Activated T-helper 1 cell treated with anti-CD3 and anti-CD28 coated beads, Interleukin-12 subunit alpha, Interleukin-12 subunit beta, Interleukin-2, Interleukin-4 antibody, amounts not matched to agents 30 ng/mL and 10 ng/mL and 1 ng/mL, durations not matched to agents 14 hours and 24 hours and 36 hours (primary cell): ENCODE measurements at regions of chr22 and their contacts with region 1.

Region 1: DNA sequence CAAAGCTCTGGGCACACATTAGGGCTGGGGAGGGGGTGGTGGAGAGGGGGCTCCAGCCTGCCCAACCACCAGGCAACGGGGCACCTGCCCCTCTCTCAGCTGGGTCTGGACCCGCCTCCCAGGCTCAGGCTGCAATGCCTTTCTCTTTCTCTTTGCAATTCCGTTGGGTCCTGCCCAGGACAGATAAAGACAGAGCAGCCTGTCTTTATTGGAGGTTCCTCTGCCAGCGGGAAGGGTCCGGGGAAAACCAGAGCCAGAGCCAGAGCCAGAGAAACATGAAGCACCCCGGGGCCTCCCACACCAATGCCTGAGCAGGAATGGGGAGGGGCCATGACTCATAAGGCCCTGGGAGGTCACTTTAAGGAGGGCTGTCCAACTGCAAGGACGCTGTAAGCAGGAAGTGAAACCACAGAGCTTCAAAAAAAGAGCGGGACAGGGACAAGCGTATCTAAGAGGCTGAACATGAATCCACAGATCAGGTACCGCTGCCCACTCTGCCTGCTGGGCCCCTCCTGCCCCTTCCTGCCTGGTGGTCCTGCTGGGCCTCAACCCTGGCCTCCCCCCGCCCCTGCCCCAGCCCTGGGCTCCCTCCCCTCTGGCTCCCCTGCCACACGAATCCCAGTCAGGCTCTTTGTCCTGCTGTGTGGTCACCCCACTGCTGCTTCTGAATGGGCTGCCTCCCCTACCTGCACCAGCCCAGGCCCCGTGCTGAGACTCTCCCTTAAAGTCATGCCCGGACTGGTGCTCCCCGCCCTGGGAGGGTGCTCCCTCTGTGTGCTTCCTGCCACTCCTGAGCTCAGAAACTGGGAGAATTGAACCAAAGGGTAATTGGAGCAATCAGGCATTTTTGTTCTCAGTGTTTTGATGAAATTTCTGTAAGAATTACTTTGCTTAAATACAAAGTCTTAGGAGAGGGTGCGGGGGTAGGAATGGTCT is at the start of gene APOBEC3B:
- DNase-seq: peak; percentile 75
- H3K4me3 Mint-ChIP-seq: peak within 1 kb of the TSS; percentile 75
- H3K27ac Mint-ChIP-seq: peak within 1 kb of the TSS; percentile 91
- H3K4me1 Mint-ChIP-seq: peaks cover 53% of the 10 kb centered on the region
- H3K27me3 Mint-ChIP-seq: no peaks in the 10 kb centered on the region
- total RNA-seq, gene APOBEC3B: 17.9 and 19.5 TPM in 2 replicates

Region 2: DNA sequence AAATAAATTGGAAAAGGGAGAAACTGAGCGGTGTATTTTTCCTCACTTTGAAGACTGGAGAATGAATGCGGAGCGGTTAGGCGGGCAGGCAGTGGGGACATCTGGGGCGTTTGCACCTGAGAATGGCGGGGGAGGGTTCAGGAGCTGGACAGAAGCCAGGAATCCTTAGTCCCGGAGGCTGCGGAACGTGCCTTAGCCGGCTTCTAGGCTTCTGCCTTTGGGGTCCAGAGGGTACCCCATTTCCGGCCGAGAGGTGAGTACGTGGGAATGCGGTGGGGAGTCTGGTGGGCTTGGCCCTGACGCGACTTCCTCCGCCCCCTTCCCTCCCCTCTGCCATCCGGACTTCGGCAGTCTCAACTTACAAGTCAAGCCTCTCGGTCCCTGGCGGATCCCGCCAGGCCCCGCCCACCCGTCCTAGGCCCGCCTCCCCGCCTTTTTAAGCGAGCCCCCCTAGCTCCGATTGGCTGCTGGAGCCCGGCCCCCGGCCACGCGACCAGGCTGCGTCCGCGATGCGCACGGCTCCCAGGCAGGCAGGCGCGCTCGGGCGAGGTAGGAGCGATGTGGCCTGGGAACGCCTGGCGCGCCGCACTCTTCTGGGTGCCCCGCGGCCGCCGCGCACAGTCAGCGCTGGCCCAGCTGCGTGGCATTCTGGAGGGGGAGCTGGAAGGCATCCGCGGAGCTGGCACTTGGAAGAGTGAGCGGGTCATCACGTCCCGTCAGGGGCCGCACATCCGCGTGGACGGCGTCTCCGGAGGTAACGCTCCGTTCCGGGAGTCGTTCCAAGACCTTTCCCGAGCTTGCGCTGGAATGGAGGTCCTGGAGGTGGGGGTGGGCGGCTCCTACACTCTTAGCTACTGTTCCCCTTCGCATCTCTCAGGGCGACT is 1174.6 kb before region 1 on chr22 and contains the start of gene GCAT:
- intact Hi-C with region 1: loop called (anchors 10 kb)
- DNase-seq: peak; percentile 90
- H3K4me3 Mint-ChIP-seq: peak within 1 kb of the TSS; percentile 82
- H3K27ac Mint-ChIP-seq: peak within 1 kb of the TSS; percentile 58
- H3K4me1 Mint-ChIP-seq: peaks cover 44% of the 10 kb centered on the region
- H3K27me3 Mint-ChIP-seq: peaks cover 13% of the 10 kb centered on the region
- total RNA-seq, gene GCAT: 28.5 and 28.9 TPM in 2 replicates

Region 3: DNA sequence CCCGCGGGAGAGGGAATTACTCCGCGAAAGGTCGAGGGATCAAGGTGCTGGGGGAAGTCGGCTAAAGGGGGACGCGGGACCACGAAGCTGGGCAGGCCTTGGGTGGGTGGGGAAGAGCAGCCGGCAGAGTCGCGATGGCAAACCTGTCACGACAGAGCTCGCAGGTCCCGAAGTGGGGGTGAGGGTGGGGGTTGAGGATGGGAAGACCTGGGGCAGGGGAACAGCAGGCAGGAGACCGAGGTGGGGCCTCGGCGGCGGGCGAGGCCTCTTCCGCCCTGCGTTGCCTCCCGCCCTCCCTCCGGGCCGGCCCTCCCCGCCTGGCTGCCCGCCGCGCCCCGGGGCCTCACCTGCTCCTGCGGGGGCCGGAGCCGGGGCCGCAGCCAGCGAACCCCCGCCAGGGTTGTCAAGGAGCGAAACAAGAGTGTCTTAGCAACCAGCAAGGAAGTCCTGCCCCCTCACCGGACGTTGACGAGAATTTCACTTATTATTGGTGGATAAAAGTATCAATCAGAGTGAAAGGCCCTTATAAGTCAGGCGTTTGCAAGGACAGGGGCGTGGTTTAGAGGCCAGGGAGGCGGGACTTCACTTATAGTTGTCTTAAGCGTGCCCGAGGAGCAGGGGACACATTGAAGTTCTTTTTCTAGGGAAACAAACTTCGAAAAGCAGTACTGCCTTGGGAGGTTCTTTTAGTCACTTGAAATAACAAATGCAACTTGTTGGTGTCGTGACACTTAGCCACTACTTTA is 188.4 kb before region 1 on chr22 and contains the start of gene DNAL4:
- intact Hi-C with region 1: loop called (anchors 2 kb)
- DNase-seq: peak; percentile 90
- H3K4me3 Mint-ChIP-seq: peak within 1 kb of the TSS; percentile 93
- H3K27ac Mint-ChIP-seq: peak within 1 kb of the TSS; percentile 80
- H3K4me1 Mint-ChIP-seq: peaks cover 22% of the 10 kb centered on the region
- H3K27me3 Mint-ChIP-seq: peaks cover 4% of the 10 kb centered on the region
- total RNA-seq, gene DNAL4: 5.0 TPM in 2 replicates

Region 4: DNA sequence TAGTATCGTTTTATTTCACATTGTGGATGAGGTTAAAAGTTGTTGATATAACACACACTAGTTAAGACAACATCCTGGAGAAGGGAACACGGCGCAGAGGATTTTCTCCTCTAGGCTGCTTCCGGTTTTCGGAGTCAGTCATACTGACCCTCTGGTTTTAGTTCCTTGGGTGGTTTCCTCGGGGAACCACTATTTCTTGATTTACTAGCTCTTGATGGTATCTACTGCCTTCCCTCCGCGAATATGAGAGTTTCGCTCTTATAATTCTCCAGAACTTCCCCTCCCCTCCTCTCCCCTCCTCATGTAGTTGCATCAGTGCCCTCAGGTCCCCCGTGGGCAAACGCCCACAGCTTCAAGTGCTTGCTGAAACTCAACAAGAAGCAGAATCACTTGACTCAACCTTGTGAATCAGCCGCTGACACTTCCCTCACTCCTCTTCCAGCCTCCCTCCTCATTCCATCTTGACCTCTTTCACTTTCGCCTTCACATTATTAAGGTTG is 40.7 kb before region 1 on chr22:
- intact Hi-C with region 1: loop called (anchors 1 kb)
- DNase-seq: peak; percentile 37
- H3K4me3 Mint-ChIP-seq: peak overlapping the region; percentile 58
- H3K27ac Mint-ChIP-seq: peak overlapping the region; percentile 83
- H3K4me1 Mint-ChIP-seq: peaks cover 44% of the 10 kb centered on the region
- H3K27me3 Mint-ChIP-seq: peaks cover 20% of the 10 kb centered on the region

Region 5: DNA sequence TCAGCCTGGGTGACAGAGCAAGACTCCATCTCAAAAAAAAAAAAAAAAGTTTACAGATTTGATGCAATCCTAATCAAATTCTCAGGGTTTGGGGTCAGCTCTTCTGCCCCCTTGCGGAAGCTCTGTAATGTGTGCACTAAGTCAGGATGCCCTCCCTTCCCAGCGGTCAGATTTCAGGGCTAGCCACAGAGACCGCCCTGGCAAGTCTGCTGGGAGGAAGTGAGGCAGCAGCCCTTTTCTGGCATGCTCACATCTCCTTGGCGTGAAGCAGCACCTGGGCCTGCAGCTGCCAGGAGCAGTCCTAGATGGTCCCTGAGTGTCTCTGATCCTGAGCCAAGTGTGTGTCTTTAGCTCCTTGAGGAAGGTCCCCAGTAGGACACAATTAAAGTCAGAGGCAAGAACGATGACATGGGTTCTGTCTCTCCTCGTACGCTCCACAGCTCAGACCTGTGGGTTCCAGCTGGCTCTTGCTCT is 20.9 kb after region 1 on chr22:
- intact Hi-C with region 1: loop called (anchors 1 kb)
- DNase-seq: peak; percentile 68
- H3K4me3 Mint-ChIP-seq: no peak overlapping the region
- H3K27ac Mint-ChIP-seq: no peak overlapping the region
- H3K4me1 Mint-ChIP-seq: peaks cover 8% of the 10 kb centered on the region
- H3K27me3 Mint-ChIP-seq: peaks cover 18% of the 10 kb centered on the region

Region 6: GRCh38 chr22:39097098-39098020 is 115.1 kb after region 1 on chr22 and contains the start of gene APOBEC3H:
- intact Hi-C with region 1: loop called (anchors 5 kb)
- DNase-seq: peak; percentile 32
- H3K4me3 Mint-ChIP-seq: peak within 1 kb of the TSS; percentile 83
- H3K27ac Mint-ChIP-seq: peak within 1 kb of the TSS; percentile 96
- H3K4me1 Mint-ChIP-seq: peaks cover 78% of the 10 kb centered on the region
- H3K27me3 Mint-ChIP-seq: no peaks in the 10 kb centered on the region
- total RNA-seq, gene APOBEC3H: 5.0 and 7.4 TPM in 2 replicates

Region 7: GRCh38 chr22:39405346-39406085 is 423.3 kb after region 1 on chr22:
- intact Hi-C with region 1: no loop called
- DNase-seq: no peak
- H3K4me3 Mint-ChIP-seq: no peak overlapping the region
- H3K27ac Mint-ChIP-seq: peak overlapping the region; percentile 23
- H3K4me1 Mint-ChIP-seq: peaks cover 29% of the 10 kb centered on the region
- H3K27me3 Mint-ChIP-seq: no peaks in the 10 kb centered on the region